ENCODE measurements at regions of chr6 and their contacts with region 1.

Region 1: GRCh38 chr6:17281100-17281494 is at the start of gene RBM24:
- DNase-seq: peak in 1 of 2 experiments; percentile 43
- H3K4me3 ChIP-seq: peak within 1 kb of the TSS; percentile 28; the same call in 1 of the 2 replicates
- H3K27ac ChIP-seq: no peak within 1 kb of the TSS
- H3K4me1 ChIP-seq: peaks cover 21% of the 10 kb centered on the region
- H3K27me3 ChIP-seq: no peaks in the 10 kb centered on the region
- CTCF ChIP-seq: no peak
- total RNA-seq, gene RBM24: 0.72 and 0.85 TPM in 2 replicates

Region 2: GRCh38 chr6:17015144-17015543 is 266.0 kb before region 1 on chr6:
- CTCF ChIA-PET with region 1: no interaction called
- POLR2A ChIA-PET with region 1: interaction called, 10 read pairs
- intact Hi-C with region 1: no loop called
- DNase-seq: no peak
- H3K4me3 ChIP-seq: no peak overlapping the region
- H3K27ac ChIP-seq: no peak overlapping the region
- H3K4me1 ChIP-seq: 0 out of 2 replicates have a peak, but pooled peaks cover 7% of the 10 kb centered on the region
- H3K27me3 ChIP-seq: no peaks in the 10 kb centered on the region
- CTCF ChIP-seq: no peak

Region 3: GRCh38 chr6:17167327-17167979 is 113.6 kb before region 1 on chr6:
- CTCF ChIA-PET with region 1: no interaction called
- POLR2A ChIA-PET with region 1: no interaction called
- intact Hi-C with region 1: loop called (anchors 10 kb)
- DNase-seq: peak in 1 of 2 experiments; percentile 42
- H3K4me3 ChIP-seq: no peak overlapping the region
- H3K27ac ChIP-seq: no peak overlapping the region
- H3K4me1 ChIP-seq: no peaks in the 10 kb centered on the region
- H3K27me3 ChIP-seq: no peaks in the 10 kb centered on the region
- CTCF ChIP-seq: peak; percentile 58

Region 4: DNA sequence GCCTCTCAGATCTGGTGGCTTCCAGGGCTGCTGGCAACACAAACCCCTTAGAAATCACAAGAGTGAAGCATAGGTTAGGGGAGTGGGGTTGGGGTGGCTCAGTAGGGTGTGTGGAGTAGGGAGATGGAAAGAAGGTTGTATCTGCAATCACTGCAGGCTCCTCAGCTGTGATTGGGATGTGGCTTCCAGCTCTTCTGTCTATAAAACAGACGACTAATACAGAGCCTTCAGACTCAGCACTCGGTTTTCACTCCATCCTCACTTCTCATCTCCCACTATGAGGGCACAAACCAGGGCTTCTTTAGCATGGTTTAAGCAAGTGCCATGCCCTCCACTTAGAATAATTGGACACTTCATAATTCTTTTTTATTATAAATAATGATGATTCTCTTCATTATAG is 65.9 kb after region 1 on chr6:
- CTCF ChIA-PET with region 1: no interaction called
- POLR2A ChIA-PET with region 1: no interaction called
- intact Hi-C with region 1: no loop called
- DNase-seq: no peak
- H3K4me3 ChIP-seq: no peak overlapping the region
- H3K27ac ChIP-seq: no peak overlapping the region
- H3K4me1 ChIP-seq: no peaks in the 10 kb centered on the region
- H3K27me3 ChIP-seq: no peaks in the 10 kb centered on the region
- CTCF ChIP-seq: no peak

Region 5: GRCh38 chr6:17417817-17418216 is 136.7 kb after region 1 on chr6:
- CTCF ChIA-PET with region 1: no interaction called
- POLR2A ChIA-PET with region 1: interaction called, 3 read pairs
- intact Hi-C with region 1: loop called (anchors 1 kb)
- DNase-seq: peak; percentile 61 to 70
- H3K4me3 ChIP-seq: no peak overlapping the region
- H3K27ac ChIP-seq: peak overlapping the region; percentile 67
- H3K4me1 ChIP-seq: peaks cover 23% of the 10 kb centered on the region; the same call in 1 of the 2 replicates
- H3K27me3 ChIP-seq: no peaks in the 10 kb centered on the region
- CTCF ChIP-seq: no peak

Region 6: DNA sequence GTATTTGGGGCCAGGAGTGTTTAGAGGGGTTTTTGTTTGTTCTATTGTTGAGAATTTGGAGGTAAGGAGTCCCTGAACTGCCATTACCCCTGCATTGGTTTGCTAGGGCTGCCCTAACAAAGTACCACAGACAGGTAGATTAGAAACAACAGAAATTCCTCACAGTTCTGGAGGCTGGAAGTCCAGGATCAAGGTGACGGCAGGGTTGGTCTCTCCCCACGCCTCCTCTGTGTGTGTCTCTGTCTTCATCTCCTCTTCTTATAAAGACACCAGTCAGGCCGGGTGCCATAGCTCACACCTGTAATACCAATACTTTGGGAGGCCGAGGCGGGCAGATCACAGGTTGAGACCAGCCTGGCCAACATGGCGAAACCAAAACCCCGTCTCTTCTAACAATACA is 222.0 kb after region 1 on chr6:
- CTCF ChIA-PET with region 1: no interaction called
- POLR2A ChIA-PET with region 1: interaction called, 42 read pairs
- intact Hi-C with region 1: no loop called
- DNase-seq: no peak
- H3K4me3 ChIP-seq: no peak overlapping the region
- H3K27ac ChIP-seq: no peak overlapping the region
- H3K4me1 ChIP-seq: no peaks in the 10 kb centered on the region
- H3K27me3 ChIP-seq: no peaks in the 10 kb centered on the region
- CTCF ChIP-seq: no peak

Region 7: DNA sequence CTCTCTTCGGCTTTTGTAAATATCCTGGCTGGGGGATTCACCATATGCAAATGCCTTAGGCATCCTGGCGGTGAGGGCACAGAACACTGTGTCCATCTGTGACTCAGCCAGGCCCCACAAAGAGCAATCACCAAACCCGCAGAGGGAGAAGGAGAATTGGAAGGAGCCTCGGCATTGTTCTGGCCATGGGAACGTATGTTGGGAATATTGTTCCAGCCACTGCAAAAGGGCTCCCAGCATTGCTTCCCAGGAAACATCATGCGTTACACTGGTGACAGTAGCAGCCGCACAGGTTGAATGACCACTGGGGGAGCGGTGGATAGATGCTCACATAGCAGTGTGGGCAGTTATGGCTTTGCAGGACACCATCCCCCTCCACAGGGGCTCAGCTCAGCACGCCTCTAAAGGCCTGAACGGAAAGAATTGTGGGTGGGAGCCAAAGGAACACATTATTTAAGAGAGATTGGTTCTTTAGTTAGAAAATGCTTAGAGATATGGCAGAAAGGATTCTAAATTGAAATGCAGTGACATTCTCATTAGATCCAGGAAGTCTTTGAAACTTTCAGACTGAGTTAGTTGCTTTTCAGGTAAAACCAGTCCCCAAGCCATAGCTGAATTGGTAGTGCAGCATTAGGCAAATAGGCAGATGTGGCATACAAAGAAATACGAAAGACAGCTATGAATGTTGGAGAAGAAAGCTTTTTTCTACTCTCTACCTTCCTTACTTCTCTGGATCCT is 1210.4 kb after region 1 on chr6:
- CTCF ChIA-PET with region 1: no interaction called
- POLR2A ChIA-PET with region 1: interaction called, 13 read pairs
- intact Hi-C with region 1: no loop called
- DNase-seq: peak; percentile 33 to 76
- H3K4me3 ChIP-seq: no peak overlapping the region
- H3K27ac ChIP-seq: no peak overlapping the region
- H3K4me1 ChIP-seq: peaks cover 42% of the 10 kb centered on the region
- H3K27me3 ChIP-seq: no peaks in the 10 kb centered on the region
- CTCF ChIP-seq: no peak

Measured in PC-9 (cell line).